T-cell (primary cell): ENCODE measurements at regions of chr7 and their contacts with region 1.

Region 1: GRCh38 chr7:64934478-64934877 is 31.4 kb downstream of the ZNF273 start:
- DNase-seq: no peak
- ATAC-seq: no peak
- H3K4me3 ChIP-seq: no peak overlapping the region
- H3K4me3 Mint-ChIP-seq: no peak overlapping the region
- H3K27ac ChIP-seq: no peak overlapping the region
- H3K27ac Mint-ChIP-seq: no peak overlapping the region
- H3K4me1 ChIP-seq: no peaks in the 10 kb centered on the region
- H3K4me1 Mint-ChIP-seq: no peaks in the 10 kb centered on the region
- H3K27me3 ChIP-seq: no peaks in the 10 kb centered on the region
- H3K27me3 Mint-ChIP-seq: no peaks in the 10 kb centered on the region

Region 2: DNA sequence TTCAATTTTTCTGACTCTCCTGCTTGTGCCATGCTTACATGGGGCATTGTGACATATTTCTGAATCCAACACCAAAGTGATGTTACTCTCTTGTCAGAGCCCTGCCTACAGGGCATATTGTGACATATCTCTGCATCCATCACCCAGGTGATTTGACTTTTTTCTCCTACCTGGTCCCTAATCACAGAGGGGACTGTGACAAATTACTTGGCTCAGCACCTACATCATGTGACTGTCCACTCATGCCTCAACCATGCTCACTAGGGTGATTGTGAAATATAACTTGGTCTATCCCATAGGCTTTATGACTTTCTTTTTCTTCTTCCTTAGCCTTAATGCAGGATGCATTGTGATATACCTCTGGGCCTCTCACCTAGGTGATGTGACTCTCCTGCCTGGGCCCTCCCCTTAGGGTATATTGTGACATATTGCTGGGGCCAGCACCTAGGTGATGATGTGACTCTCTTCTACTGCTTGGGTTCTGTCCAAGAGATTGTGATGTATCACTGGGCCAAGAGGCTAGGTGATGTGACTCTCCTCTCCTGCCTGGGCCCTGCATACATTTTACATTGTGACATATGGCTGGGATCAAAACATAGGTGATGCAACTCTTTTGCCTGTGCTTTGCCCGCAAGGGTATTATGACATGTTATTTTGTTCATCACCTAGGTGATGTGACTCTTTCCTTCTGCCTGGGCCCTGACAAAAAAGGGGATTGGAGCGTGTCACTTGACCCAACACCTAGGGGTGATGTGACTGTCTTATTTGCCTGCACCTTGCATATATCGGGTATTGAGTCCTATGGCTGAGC is 283.3 kb before region 1 on chr7:
- CTCF ChIA-PET with region 1: no interaction called
- POLR2A ChIA-PET with region 1: no interaction called
- DNase-seq: no peak
- ATAC-seq: no peak
- H3K4me3 ChIP-seq: no peak overlapping the region
- H3K4me3 Mint-ChIP-seq: no peak overlapping the region
- H3K27ac ChIP-seq: no peak overlapping the region
- H3K27ac Mint-ChIP-seq: no peak overlapping the region
- H3K4me1 ChIP-seq: no peaks in the 10 kb centered on the region
- H3K4me1 Mint-ChIP-seq: no peaks in the 10 kb centered on the region
- H3K27me3 ChIP-seq: no peaks in the 10 kb centered on the region
- H3K27me3 Mint-ChIP-seq: no peaks in the 10 kb centered on the region

Region 3: GRCh38 chr7:64768824-64769223 is 165.7 kb before region 1 on chr7:
- CTCF ChIA-PET with region 1: no interaction called
- POLR2A ChIA-PET with region 1: no interaction called
- DNase-seq: no peak
- ATAC-seq: no peak
- H3K4me3 ChIP-seq: no peak overlapping the region
- H3K4me3 Mint-ChIP-seq: no peak overlapping the region
- H3K27ac ChIP-seq: no peak overlapping the region
- H3K27ac Mint-ChIP-seq: no peak overlapping the region
- H3K4me1 ChIP-seq: no peaks in the 10 kb centered on the region
- H3K4me1 Mint-ChIP-seq: no peaks in the 10 kb centered on the region
- H3K27me3 ChIP-seq: no peaks in the 10 kb centered on the region
- H3K27me3 Mint-ChIP-seq: peaks cover 0 to 9% of the 10 kb centered on the region in 2 donors

Region 4: DNA sequence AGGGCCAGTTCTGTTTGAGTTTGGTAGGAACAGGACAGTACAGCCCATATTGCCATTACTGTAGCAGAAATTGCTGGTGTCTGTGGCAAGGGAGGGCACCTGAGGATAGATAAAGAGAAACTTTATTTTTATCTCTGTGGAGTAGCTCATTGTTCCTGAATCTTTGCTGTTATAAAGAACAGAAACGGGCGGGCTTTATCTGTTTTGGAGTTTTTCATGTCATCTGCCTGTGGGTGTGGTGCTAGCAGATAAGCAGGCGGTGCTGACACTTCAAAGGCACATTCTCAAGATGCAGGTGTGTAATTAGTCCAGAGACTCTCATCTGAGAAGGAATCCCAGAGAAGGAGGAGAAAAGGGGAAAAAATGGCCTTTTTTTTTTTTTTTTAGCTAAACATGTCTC is 19.9 kb before region 1 on chr7:
- CTCF ChIA-PET with region 1: no interaction called
- POLR2A ChIA-PET with region 1: interaction called, 5 to 14 read pairs
- DNase-seq: no peak
- ATAC-seq: no peak
- H3K4me3 ChIP-seq: no peak overlapping the region
- H3K4me3 Mint-ChIP-seq: no peak overlapping the region
- H3K27ac ChIP-seq: no peak overlapping the region
- H3K27ac Mint-ChIP-seq: no peak overlapping the region
- H3K4me1 ChIP-seq: no peaks in the 10 kb centered on the region
- H3K4me1 Mint-ChIP-seq: peaks cover 8 to 24% (median 21%) of the 10 kb centered on the region in 3 donors
- H3K27me3 ChIP-seq: no peaks in the 10 kb centered on the region
- H3K27me3 Mint-ChIP-seq: no peaks in the 10 kb centered on the region